WTC11 (cell line): ENCODE measurements at regions of chr12 and their contacts with region 1.

Region 1: DNA sequence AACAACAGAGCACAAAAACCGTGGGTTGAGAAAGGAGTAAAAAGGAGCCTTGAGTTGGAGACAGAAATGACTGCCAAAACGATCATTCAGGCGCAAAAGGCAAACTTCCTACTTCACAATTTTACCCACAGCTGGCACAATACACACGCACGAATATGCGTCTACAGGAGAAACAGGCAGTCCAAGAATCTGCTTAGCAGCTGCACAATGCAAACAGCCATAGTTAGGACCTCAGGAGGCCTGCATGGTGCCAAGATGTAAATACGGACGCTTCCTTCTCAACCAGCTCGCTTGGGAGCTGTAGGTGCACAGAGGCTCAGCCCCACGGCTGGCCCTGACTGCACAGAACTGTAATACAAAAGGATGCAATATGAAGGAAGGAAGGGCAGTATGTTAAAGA is 250.1 kb upstream of the CAND1 start:
- DNase-seq: no peak
- ATAC-seq: peak; percentile 49
- H3K4me3 Mint-ChIP-seq: 0 out of 2 replicates have a peak overlapping the region, but pooled peaks have one; percentile 20
- H3K27ac Mint-ChIP-seq: peak overlapping the region; percentile 44
- H3K4me1 Mint-ChIP-seq: peaks cover 43% of the 10 kb centered on the region
- H3K27me3 Mint-ChIP-seq: no peaks in the 10 kb centered on the region; the same call in 1 of the 2 replicates
- CTCF ChIP-seq: no peak

Region 2: GRCh38 chr12:66925087-66925486 is 94.0 kb before region 1 on chr12:
- CTCF ChIA-PET with region 1: no interaction called
- POLR2A ChIA-PET with region 1: no interaction called
- DNase-seq: no peak
- ATAC-seq: no peak
- H3K4me3 Mint-ChIP-seq: no peak overlapping the region
- H3K27ac Mint-ChIP-seq: no peak overlapping the region
- H3K4me1 Mint-ChIP-seq: peaks cover 11% of the 10 kb centered on the region
- H3K27me3 Mint-ChIP-seq: no peaks in the 10 kb centered on the region
- CTCF ChIP-seq: no peak

Region 3: DNA sequence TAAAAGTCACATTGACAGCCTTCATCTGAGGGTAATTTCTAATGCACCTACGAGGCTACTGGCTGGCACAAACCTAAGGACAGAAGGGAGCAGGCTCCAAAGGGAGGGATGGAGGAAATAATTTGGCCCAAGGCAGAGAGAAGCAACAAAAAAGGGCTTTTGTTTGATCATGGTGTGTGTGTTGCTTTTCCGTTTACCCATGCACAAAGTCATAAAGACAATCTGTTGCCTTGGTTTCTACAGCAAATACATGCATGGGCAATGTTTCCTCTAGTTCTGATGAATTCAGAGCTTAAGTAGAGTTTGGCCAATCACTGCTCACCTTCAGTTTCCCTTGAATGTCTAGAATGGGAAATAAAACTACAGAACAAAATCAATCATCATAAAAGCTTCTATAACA is 12.5 kb before region 1 on chr12:
- CTCF ChIA-PET with region 1: interaction called, 11 read pairs
- POLR2A ChIA-PET with region 1: no interaction called
- DNase-seq: no peak
- ATAC-seq: no peak
- H3K4me3 Mint-ChIP-seq: no peak overlapping the region
- H3K27ac Mint-ChIP-seq: no peak overlapping the region
- H3K4me1 Mint-ChIP-seq: no peaks in the 10 kb centered on the region
- H3K27me3 Mint-ChIP-seq: no peaks in the 10 kb centered on the region
- CTCF ChIP-seq: no peak

Region 4: GRCh38 chr12:67222302-67222701 is 203.2 kb after region 1 on chr12:
- CTCF ChIA-PET with region 1: interaction called, 16 read pairs
- POLR2A ChIA-PET with region 1: no interaction called
- DNase-seq: no peak
- ATAC-seq: peak; percentile 73
- H3K4me3 Mint-ChIP-seq: no peak overlapping the region
- H3K27ac Mint-ChIP-seq: no peak overlapping the region
- H3K4me1 Mint-ChIP-seq: peaks cover 7% of the 10 kb centered on the region
- H3K27me3 Mint-ChIP-seq: peaks cover under 1% of the 10 kb centered on the region; the same call in 1 of the 2 replicates
- CTCF ChIP-seq: no peak